Activated B cell treated with CpG ODN at 0.5 μM for 24 hours (primary cell): ENCODE measurements at regions of chr6 and their contacts with region 1.

Region 1: GRCh38 chr6:79466207-79466834 is 70.9 kb downstream of the LCA5 start:
- DNase-seq: no peak
- ATAC-seq: no peak
- H3K4me3 Mint-ChIP-seq: no peak overlapping the region
- H3K27ac Mint-ChIP-seq: no peak overlapping the region
- H3K4me1 Mint-ChIP-seq: no peaks in the 10 kb centered on the region
- H3K27me3 Mint-ChIP-seq: peaks cover 2% of the 10 kb centered on the region
- CTCF ChIP-seq: no peak

Region 2: GRCh38 chr6:77466055-77466450 is 2000.3 kb before region 1 on chr6:
- CTCF ChIA-PET with region 1: no interaction called
- POLR2A ChIA-PET with region 1: no interaction called
- intact Hi-C with region 1: loop called (anchors 5 kb)
- DNase-seq: no peak
- ATAC-seq: peak; percentile 62
- H3K4me3 Mint-ChIP-seq: peak overlapping the region; percentile 84
- H3K27ac Mint-ChIP-seq: no peak overlapping the region
- H3K4me1 Mint-ChIP-seq: peaks cover 12% of the 10 kb centered on the region
- H3K27me3 Mint-ChIP-seq: peaks cover 38% of the 10 kb centered on the region
- CTCF ChIP-seq: no peak

Region 3: DNA sequence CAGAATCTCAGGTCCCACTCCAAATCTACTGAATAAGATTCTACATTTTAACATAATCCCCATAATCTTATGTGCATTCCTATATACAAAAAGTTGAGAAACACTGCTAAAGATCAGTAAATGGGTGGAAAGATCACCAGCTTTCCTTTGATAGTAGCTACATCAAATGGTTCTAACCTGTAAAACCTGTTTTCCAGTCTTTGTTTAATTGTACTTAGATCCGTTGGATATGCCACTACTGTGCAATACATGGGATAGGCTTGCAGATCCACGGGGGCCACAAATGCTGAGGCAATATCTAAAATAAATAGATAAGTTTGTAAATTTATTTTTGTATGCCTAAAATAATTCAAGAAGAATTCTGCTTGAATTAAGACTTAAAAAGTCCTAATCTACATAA is 504.8 kb before region 1 on chr6:
- CTCF ChIA-PET with region 1: no interaction called
- POLR2A ChIA-PET with region 1: no interaction called
- intact Hi-C with region 1: no loop called
- DNase-seq: no peak
- ATAC-seq: no peak
- H3K4me3 Mint-ChIP-seq: no peak overlapping the region
- H3K27ac Mint-ChIP-seq: no peak overlapping the region
- H3K4me1 Mint-ChIP-seq: no peaks in the 10 kb centered on the region
- H3K27me3 Mint-ChIP-seq: no peaks in the 10 kb centered on the region
- CTCF ChIP-seq: no peak